HepG2 (cell line): ENCODE measurements at regions of chr19 and their contacts with region 1.

Region 1: GRCh38 chr19:48618916-48619691 is at the starts of genes RPL18 and SPHK2:
- DNase-seq: peak; percentile 99
- ATAC-seq: peak; percentile 87
- H3K4me3 ChIP-seq: peak within 1 kb of the TSS; percentile 89 to 99 (median 89)
- H3K27ac ChIP-seq: peak within 1 kb of the TSS; percentile 76
- H3K4me1 ChIP-seq: peaks cover 51% of the 10 kb centered on the region
- H3K27me3 ChIP-seq: no peaks in the 10 kb centered on the region; a peak in 1 of 5 replicates
- CTCF ChIP-seq: peak; percentile 41
- EP300 ChIP-seq: peak in 1 of 2 experiments; percentile 32; a peak in 1 of 4 replicates
- POLR2A ChIP-seq: peak; percentile 94 to 97
- RAD21 ChIP-seq: peak; percentile 7; the same call in 1 of the 2 replicates
- total RNA-seq, gene RPL18: 1,485 and 1,498 TPM in 2 replicates
- total RNA-seq, gene SPHK2: 11.1 and 14.4 TPM in 2 replicates

Region 2: GRCh38 chr19:48489608-48490216 is 129.4 kb before region 1 on chr19:
- CTCF ChIA-PET with region 1: no interaction called
- POLR2A ChIA-PET with region 1: interaction called, 11 read pairs
- in situ Hi-C with region 1: no loop called
- intact Hi-C with region 1: no loop called
- DNase-seq: peak; percentile 47
- ATAC-seq: peak; percentile 67
- H3K4me3 ChIP-seq: no peak overlapping the region
- H3K27ac ChIP-seq: no peak overlapping the region
- H3K4me1 ChIP-seq: peaks cover 36% of the 10 kb centered on the region
- H3K27me3 ChIP-seq: no peaks in the 10 kb centered on the region
- CTCF ChIP-seq: peak; percentile 93
- EP300 ChIP-seq: no peak
- POLR2A ChIP-seq: no peak
- RAD21 ChIP-seq: peak; percentile 88

Region 3: GRCh38 chr19:48501496-48502350 is 117.4 kb before region 1 on chr19:
- CTCF ChIA-PET with region 1: no interaction called
- POLR2A ChIA-PET with region 1: interaction called, 13 read pairs
- in situ Hi-C with region 1: no loop called
- intact Hi-C with region 1: no loop called
- DNase-seq: peak; percentile 86
- ATAC-seq: peak; percentile 64
- H3K4me3 ChIP-seq: peak overlapping the region; percentile 58 to 85 (median 60)
- H3K27ac ChIP-seq: no peak overlapping the region
- H3K4me1 ChIP-seq: peaks cover 47% of the 10 kb centered on the region
- H3K27me3 ChIP-seq: peaks cover 0 to 9% of the 10 kb centered on the region in 2 experiments; a peak in 1 of 5 replicates
- CTCF ChIP-seq: 0 out of 2 replicates have a peak, but pooled peaks have one; percentile 1
- EP300 ChIP-seq: no peak
- POLR2A ChIP-seq: peak in 1 of 2 experiments; percentile 55; a peak in 1 of 4 replicates
- RAD21 ChIP-seq: no peak

Region 4: DNA sequence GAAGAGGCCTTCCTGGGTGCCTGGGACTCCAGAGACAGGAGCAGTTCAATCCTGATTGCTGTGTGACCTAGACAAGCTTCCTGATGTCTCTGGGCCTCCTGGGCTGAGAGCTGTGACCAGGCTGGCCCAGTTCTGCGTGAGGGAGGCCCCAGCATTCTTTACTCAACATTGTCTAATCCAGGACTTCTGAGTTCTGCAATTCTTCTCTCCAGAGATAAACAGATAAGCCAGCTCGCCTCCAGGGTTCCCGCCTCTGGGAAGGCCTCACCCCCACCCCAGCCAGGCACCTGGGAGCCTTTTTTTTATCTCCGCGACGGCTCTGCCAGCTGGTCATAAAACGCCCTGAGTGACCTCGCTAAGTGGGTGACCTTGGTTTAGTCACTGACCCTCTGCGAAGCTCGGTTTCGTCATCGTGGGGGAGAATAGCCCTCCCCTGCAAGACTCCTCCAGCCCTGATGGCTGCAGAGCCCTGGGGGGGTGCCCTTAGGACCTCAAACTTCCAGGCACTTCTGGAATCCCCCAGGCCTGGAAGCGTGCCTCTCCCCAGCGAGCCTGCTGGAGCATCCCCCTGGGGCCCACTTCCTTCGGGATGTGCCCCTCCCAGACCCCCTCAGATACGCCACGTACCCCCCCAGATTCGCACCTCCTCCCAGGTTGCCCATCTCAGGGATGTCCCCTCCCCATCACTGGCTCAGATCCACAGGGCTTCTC is 65.3 kb before region 1 on chr19:
- CTCF ChIA-PET with region 1: no interaction called
- POLR2A ChIA-PET with region 1: interaction called, 10 read pairs
- in situ Hi-C with region 1: no loop called
- intact Hi-C with region 1: no loop called
- DNase-seq: peak; percentile 69
- ATAC-seq: peak; percentile 11
- H3K4me3 ChIP-seq: peak overlapping the region; percentile 26 to 60 (median 26); a peak in 3 of 6 replicates
- H3K27ac ChIP-seq: peak overlapping the region; percentile 26
- H3K4me1 ChIP-seq: peaks cover 92% of the 10 kb centered on the region
- H3K27me3 ChIP-seq: peaks cover 0 to 15% of the 10 kb centered on the region in 2 experiments; a peak in 3 of 5 replicates
- CTCF ChIP-seq: no peak
- EP300 ChIP-seq: peak in 1 of 2 experiments; percentile 47; a peak in 2 of 4 replicates
- POLR2A ChIP-seq: no peak
- RAD21 ChIP-seq: no peak

Region 5: GRCh38 chr19:48608798-48609263 is 10.3 kb before region 1 on chr19:
- CTCF ChIA-PET with region 1: no interaction called
- POLR2A ChIA-PET with region 1: interaction called, 28 read pairs
- in situ Hi-C with region 1: no loop called
- intact Hi-C with region 1: no loop called
- DNase-seq: peak; percentile 42
- ATAC-seq: peak; percentile 52
- H3K4me3 ChIP-seq: peak overlapping the region in 1 of 3 experiments; percentile 56; a peak in 2 of 6 replicates
- H3K27ac ChIP-seq: no peak overlapping the region
- H3K4me1 ChIP-seq: peaks cover 21% of the 10 kb centered on the region
- H3K27me3 ChIP-seq: no peaks in the 10 kb centered on the region; a peak in 1 of 5 replicates
- CTCF ChIP-seq: peak; percentile 89
- EP300 ChIP-seq: no peak
- POLR2A ChIP-seq: no peak
- RAD21 ChIP-seq: peak; percentile 75

Region 6: DNA sequence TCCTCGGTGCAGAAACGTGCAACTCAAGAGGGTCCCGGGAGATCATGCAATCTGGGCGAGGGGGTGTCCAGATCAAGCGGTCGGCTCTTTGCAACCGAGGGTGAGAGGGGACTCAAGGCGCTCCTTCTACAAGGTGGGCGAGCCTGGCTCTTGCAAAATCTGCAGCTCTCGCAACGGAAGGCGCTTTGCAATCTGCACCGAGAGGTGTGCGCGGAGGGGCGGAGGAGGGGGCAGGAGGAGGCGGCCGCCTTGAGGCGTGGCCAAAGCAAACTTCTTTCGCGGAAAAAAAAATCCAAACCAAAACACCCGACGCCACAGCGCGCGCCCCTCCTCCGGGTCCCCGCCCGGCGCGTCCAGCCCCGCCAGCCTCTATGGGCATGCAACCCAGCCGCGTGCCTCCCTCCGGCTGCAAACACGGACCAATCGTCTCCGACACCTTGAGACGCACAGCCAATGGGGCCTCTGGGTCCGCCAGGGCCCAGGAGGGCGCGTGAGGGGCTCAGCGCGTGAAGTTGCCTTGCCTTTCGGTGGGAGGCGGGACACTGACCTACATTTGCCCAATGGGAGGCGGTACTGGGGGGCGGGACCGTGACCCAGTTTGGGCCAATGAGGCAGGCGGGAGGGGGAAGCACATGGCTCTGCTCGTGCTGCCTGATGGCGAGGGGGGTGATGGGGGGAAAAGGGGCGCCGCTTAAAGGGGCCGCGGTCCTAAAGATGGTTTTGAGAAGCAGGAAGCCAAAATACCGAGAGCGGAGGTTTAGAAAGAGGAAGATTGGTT is 18.3 kb after region 1 on chr19 and contains the start of gene DBP:
- CTCF ChIA-PET with region 1: no interaction called
- POLR2A ChIA-PET with region 1: interaction called, 61 read pairs
- in situ Hi-C with region 1: no loop called
- intact Hi-C with region 1: loop called (anchors 2 kb)
- DNase-seq: peak; percentile 96
- ATAC-seq: peak; percentile 85
- H3K4me3 ChIP-seq: peak within 1 kb of the TSS; percentile 56 to 76 (median 59)
- H3K27ac ChIP-seq: peak within 1 kb of the TSS; percentile 70
- H3K4me1 ChIP-seq: peaks cover 71% of the 10 kb centered on the region
- H3K27me3 ChIP-seq: peaks cover 0 to 8% of the 10 kb centered on the region in 2 experiments; a peak in 3 of 5 replicates
- CTCF ChIP-seq: no peak
- EP300 ChIP-seq: 0 out of 4 replicates have a peak, but pooled peaks of 1 of the 2 experiments have one; percentile 20
- POLR2A ChIP-seq: peak in 1 of 2 experiments; percentile 47; a peak in 2 of 4 replicates
- RAD21 ChIP-seq: no peak
- total RNA-seq, gene DBP: 5.5 and 5.8 TPM in 2 replicates

Region 7: DNA sequence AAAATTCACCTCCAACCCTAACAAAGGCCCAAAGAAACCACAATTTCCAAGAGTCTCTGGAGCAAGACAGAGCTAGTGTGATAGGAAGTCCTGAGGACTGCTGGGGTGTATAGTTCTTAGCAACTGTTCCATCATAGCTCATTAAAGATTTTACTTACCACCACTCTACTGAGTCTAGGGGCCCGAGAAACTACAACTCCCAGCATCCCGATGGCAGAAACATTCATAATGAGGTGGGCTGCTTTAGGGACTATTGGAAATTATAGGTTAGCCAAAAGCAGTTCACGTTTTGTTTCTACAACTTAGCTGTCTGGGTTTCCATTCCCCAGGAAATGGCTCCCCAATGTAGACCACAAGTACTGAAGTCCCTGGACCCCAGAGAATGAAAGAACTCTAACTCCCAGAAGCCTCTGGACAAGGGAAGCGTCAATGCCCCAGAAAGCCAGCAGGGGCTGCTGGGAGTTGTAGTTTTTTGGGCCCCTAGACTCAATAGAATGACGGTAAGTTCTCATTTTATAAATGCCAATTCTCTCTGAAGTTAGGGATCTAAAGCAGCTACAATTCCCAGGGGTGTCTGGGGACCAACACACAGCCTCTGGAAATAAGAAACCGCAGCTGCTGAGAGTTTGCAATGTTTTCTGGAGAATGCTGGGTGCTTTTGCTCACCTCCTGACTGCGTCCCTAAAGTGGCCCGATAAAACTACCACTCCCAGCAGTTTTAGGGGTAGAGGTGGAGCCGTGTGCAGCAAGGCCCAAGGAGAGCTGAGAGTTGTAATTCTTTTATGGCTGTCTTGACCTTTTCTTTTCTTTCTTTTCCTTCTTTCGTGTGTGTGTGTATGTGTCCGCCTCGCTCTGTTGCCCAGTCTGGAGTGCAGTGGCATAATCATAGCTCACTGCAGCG is 357.1 kb after region 1 on chr19:
- CTCF ChIA-PET with region 1: no interaction called
- POLR2A ChIA-PET with region 1: no interaction called
- in situ Hi-C with region 1: no loop called
- intact Hi-C with region 1: no loop called
- DNase-seq: no peak
- ATAC-seq: peak; percentile 59
- H3K4me3 ChIP-seq: no peak overlapping the region
- H3K27ac ChIP-seq: no peak overlapping the region
- H3K4me1 ChIP-seq: no peaks in the 10 kb centered on the region
- H3K27me3 ChIP-seq: no peaks in the 10 kb centered on the region
- CTCF ChIP-seq: no peak
- EP300 ChIP-seq: no peak
- POLR2A ChIP-seq: no peak
- RAD21 ChIP-seq: no peak